GM12878 (cell line): ENCODE measurements at regions of chr1 and their contacts with region 1.

Region 1: DNA sequence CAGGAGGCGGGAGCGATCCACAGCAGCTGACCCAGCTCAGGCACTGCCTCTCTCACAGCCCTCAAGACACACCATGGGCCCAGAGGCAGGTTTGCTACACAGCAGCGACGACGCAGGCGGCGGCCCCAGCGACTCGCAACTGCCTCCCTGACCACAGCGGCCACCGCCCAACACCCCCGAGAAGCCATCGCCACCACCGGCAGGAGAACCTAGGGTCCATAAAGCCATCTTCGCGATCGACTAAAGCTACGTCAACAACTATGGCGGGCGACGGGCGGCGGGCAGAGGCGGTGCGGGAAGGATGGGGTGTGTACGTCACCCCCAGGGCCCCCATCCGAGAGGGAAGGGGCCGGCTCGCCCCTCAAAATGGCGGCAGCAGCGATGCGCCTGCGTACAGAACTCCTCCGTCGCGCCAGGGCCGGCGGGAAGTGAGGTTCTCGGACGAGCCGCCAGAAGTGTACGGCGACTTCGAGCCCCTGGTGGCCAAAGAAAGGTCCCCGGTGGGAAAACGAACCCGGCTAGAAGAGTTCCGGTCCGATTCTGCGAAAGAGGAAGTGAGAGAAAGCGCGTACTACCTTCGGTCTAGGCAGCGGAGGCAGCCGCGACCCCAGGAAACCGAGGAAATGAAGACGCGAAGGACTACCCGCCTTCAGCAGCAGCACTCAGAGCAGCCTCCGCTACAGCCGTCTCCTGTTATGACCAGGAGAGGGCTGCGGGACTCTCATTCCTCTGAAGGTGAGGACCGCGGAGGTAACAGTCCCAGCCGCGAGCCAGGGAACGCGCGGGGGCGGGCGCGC is at the start of gene TOR1AIP1:
- DNase-seq: peak; percentile 97
- ATAC-seq: peak; percentile 84
- H3K4me3 ChIP-seq: peak within 1 kb of the TSS; percentile 93
- H3K27ac ChIP-seq: peak within 1 kb of the TSS; percentile 96
- H3K4me1 ChIP-seq: peaks cover 8% of the 10 kb centered on the region; the same call in 1 of the 2 replicates
- H3K27me3 ChIP-seq: no peaks in the 10 kb centered on the region
- CTCF ChIP-seq: peak; percentile 5 to 36 (median 29); a peak in 3 of 6 replicates
- EP300 ChIP-seq: peak; percentile 64 to 92
- POLR2A ChIP-seq: peak; percentile 97
- RAD21 ChIP-seq: peak; percentile 28
- polyA plus RNA-seq, gene TOR1AIP1: 16.4 to 19.0 TPM

Region 2: GRCh38 chr1:179954493-179955297 is 72.3 kb after region 1 on chr1 and contains the start of gene CEP350:
- CTCF ChIA-PET with region 1: no interaction called
- POLR2A ChIA-PET with region 1: interaction called, 15 read pairs
- RAD21 ChIA-PET with region 1: interaction called, 5 read pairs
- SMC1A ChIA-PET with region 1: interaction called, 6 read pairs
- in situ Hi-C with region 1: loop called (anchors 5 kb)
- intact Hi-C with region 1: loop called (anchors 1 kb)
- DNase-seq: peak; percentile 99
- ATAC-seq: peak; percentile 93
- H3K4me3 ChIP-seq: peak within 1 kb of the TSS; percentile 85
- H3K27ac ChIP-seq: peak within 1 kb of the TSS; percentile 76
- H3K4me1 ChIP-seq: peaks cover 21% of the 10 kb centered on the region
- H3K27me3 ChIP-seq: no peaks in the 10 kb centered on the region
- CTCF ChIP-seq: no peak
- EP300 ChIP-seq: no peak
- POLR2A ChIP-seq: peak; percentile 98
- RAD21 ChIP-seq: no peak
- polyA plus RNA-seq, gene CEP350: 5.2 to 6.7 TPM

Region 3: GRCh38 chr1:180003026-180003695 is 120.7 kb after region 1 on chr1:
- CTCF ChIA-PET with region 1: no interaction called
- POLR2A ChIA-PET with region 1: no interaction called
- RAD21 ChIA-PET with region 1: no interaction called
- SMC1A ChIA-PET with region 1: interaction called, 6 read pairs
- in situ Hi-C with region 1: no loop called
- intact Hi-C with region 1: loop called (anchors 2 kb)
- DNase-seq: peak; percentile 44
- ATAC-seq: peak; percentile 94
- H3K4me3 ChIP-seq: no peak overlapping the region
- H3K27ac ChIP-seq: peak overlapping the region; percentile 61
- H3K4me1 ChIP-seq: peaks cover 18% of the 10 kb centered on the region
- H3K27me3 ChIP-seq: no peaks in the 10 kb centered on the region
- CTCF ChIP-seq: no peak
- EP300 ChIP-seq: no peak
- POLR2A ChIP-seq: no peak
- RAD21 ChIP-seq: no peak

Region 4: DNA sequence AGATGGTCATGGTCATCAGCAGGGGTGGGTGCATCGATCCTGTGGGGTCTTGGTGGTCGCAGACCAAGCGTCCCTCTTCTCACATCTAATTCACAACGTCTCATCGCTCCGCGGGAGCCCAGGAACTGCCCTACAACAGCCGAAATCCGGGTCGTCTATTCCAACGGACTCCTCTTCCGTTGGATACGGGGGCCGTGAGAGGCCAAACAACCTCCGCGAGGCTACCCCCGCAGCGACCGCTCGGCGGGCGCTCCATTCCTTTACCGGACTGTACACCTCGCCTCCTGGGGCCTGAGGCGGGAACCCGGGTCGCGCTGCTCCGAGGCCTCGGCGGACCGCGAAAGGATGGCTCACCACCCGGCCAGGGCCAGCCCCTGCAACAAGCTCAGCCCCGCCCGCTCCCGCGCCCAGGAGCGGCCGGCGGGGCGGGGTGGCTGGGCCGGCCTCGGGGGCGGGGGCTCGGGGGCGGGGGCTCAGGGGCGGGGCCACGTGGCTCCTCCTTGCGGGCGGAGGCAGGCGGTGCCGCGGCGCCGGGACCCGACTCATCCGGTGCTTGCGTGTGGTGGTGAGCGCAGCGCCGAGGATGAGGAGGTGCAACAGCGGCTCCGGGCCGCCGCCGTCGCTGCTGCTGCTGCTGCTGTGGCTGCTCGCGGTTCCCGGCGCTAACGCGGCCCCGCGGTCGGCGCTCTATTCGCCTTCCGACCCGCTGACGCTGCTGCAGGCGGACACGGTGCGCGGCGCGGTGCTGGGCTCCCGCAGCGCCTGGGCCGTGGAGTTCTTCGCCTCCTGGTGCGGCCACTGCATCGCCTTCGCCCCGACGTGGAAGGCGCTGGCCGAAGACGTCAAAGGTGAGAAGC is 272.1 kb after region 1 on chr1 and contains the start of gene QSOX1:
- CTCF ChIA-PET with region 1: no interaction called
- POLR2A ChIA-PET with region 1: interaction called, 10 read pairs
- RAD21 ChIA-PET with region 1: interaction called, 4 read pairs
- SMC1A ChIA-PET with region 1: interaction called, 3 read pairs
- in situ Hi-C with region 1: no loop called
- intact Hi-C with region 1: loop called (anchors 5 kb)
- DNase-seq: peak; percentile 19
- ATAC-seq: peak; percentile 89
- H3K4me3 ChIP-seq: peak within 1 kb of the TSS; percentile 86
- H3K27ac ChIP-seq: peak within 1 kb of the TSS; percentile 73
- H3K4me1 ChIP-seq: peaks cover 13% of the 10 kb centered on the region; the same call in 1 of the 2 replicates
- H3K27me3 ChIP-seq: no peaks in the 10 kb centered on the region
- CTCF ChIP-seq: peak in 2 of 3 experiments; percentile 3 to 12; a peak in 3 of 6 replicates
- EP300 ChIP-seq: no peak
- POLR2A ChIP-seq: peak; percentile 97
- RAD21 ChIP-seq: no peak
- polyA plus RNA-seq, gene QSOX1: 1.8 to 6.1 TPM